GM12878 (cell line): ENCODE measurements at regions of chr16 and their contacts with region 1.

Region 1: DNA sequence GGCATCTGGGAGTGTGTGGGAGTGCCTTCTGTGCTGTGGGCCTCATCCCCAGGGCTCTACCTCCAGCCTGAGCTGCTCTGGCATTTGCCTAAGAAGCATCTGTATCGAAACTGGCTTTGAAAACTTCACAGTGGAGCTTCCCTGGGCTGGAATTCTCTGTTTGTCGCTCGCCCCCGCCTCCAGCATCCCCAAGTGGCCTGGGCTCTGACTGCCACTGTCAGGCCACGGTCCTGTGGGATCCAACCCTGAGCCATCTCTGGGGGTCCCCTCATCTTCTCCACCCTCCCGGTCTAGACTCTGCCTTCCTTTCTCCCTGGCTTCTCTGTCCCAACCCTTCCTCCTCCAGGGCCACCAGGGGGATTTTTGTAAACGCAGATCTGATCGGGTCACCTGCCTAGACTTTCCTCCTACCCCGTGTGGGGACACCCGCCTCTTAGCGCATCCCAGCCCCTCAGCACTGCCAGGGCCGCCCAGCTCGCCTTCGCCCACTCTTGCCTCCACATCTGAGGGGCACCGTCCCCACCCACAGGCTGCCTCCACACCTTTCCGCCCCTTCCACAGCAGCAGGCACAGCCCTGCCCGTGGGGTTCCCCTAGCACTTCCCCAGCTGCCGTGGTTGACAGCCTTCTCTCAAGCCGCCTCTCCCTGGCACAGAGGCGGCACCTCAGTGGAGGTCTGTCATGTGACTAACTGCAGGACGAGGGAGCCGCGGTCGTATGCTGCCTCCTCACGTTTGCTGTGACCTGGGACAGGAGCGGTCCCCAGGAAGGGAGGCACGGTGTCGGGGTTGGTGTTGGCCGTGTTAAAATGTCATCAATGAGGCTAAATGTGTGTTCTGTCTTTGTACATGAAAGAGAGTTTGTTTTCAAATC is 12.0 kb downstream of the TBC1D24 start:
- DNase-seq: peak; percentile 51
- ATAC-seq: peak; percentile 98
- H3K4me3 ChIP-seq: no peak overlapping the region
- H3K27ac ChIP-seq: no peak overlapping the region
- H3K4me1 ChIP-seq: peaks cover 16% of the 10 kb centered on the region
- H3K27me3 ChIP-seq: no peaks in the 10 kb centered on the region
- CTCF ChIP-seq: peak; percentile 49 to 95 (median 67); a peak in 5 of 6 replicates
- EP300 ChIP-seq: no peak; a peak in 1 of 4 replicates
- POLR2A ChIP-seq: peak; percentile 24; the same call in 1 of the 2 replicates
- RAD21 ChIP-seq: peak; percentile 61

Region 2: DNA sequence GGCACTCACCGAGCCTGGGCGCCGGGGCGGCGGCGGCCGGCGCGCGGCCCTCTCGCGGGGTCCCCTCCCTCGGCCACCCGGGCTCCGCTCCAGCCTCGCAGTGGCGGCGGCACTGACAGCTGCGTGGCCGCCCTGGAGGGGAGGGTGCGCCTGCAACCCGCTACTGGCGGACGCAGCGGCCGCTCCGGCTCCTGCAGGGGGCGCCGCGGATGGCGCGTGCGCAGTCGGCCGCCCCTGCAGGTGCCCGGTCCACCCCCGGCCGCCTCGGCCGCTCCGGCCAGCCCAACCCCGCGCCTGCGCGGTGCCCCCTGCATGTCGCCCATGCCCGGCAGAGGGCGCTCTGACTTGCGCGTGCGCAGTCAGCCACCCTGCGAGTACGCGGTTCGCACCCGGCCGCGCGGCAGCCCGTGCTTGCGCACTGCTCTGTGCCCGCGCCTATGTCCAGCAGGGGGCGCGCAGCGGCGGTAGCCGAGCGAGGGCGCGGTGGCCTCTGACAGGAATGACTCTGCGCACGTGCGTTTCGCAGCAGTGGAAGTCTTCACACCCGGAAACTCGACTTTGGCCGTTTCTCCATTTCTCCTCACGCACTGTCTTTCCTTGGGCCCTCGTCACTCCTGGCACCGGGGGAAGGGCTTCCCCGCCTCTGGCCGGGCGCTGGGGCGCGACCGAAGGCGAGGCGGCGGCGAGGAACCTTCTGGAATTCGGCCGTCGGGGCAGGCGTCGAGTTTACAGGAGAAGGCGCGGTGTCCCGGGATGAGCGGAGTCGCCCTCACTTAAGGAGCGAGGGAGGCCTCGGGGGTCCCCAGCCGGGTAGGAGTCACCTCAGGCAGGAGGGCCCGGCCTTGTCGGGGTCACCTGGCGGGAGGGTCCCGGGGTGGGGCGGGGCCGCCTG is 146.1 kb before region 1 on chr16 and contains the start of gene ABCA3:
- CTCF ChIA-PET with region 1: interaction called, 3 read pairs
- POLR2A ChIA-PET with region 1: no interaction called
- RAD21 ChIA-PET with region 1: no interaction called
- SMC1A ChIA-PET with region 1: no interaction called
- in situ Hi-C with region 1: no loop called
- intact Hi-C with region 1: loop called (anchors 5 kb)
- DNase-seq: peak; percentile 79
- ATAC-seq: peak; percentile 94
- H3K4me3 ChIP-seq: peak within 1 kb of the TSS; percentile 94
- H3K27ac ChIP-seq: peak within 1 kb of the TSS; percentile 31
- H3K4me1 ChIP-seq: peaks cover 3% of the 10 kb centered on the region; the same call in 1 of the 2 replicates
- H3K27me3 ChIP-seq: no peaks in the 10 kb centered on the region
- CTCF ChIP-seq: peak; percentile 92 to 100 (median 94)
- EP300 ChIP-seq: 0 out of 4 replicates have a peak, but pooled peaks of 1 of the 2 experiments have one; percentile 21
- POLR2A ChIP-seq: peak; percentile 57; the same call in 1 of the 2 replicates
- RAD21 ChIP-seq: peak; percentile 62
- polyA plus RNA-seq, gene ABCA3: 0.71 to 1.3 TPM

Region 3: GRCh38 chr16:2467521-2468151 is 19.2 kb before region 1 on chr16:
- CTCF ChIA-PET with region 1: interaction called, 4 read pairs
- POLR2A ChIA-PET with region 1: interaction called, 7 read pairs
- RAD21 ChIA-PET with region 1: interaction called, 17 read pairs
- SMC1A ChIA-PET with region 1: interaction called, 8 read pairs
- in situ Hi-C with region 1: no loop called
- intact Hi-C with region 1: no loop called
- DNase-seq: no peak
- ATAC-seq: peak; percentile 55
- H3K4me3 ChIP-seq: peak overlapping the region; percentile 72; the same call in 1 of the 2 replicates
- H3K27ac ChIP-seq: no peak overlapping the region
- H3K4me1 ChIP-seq: peaks cover 13% of the 10 kb centered on the region
- H3K27me3 ChIP-seq: peaks cover 0 to 2% of the 10 kb centered on the region in 2 experiments; a peak in 1 of 4 replicates
- CTCF ChIP-seq: peak in 1 of 3 experiments; percentile 13; a peak in 1 of 6 replicates
- EP300 ChIP-seq: no peak; a peak in 1 of 4 replicates
- POLR2A ChIP-seq: peak; percentile 68
- RAD21 ChIP-seq: no peak

Region 4: GRCh38 chr16:2474877-2475412 is 11.9 kb before region 1 on chr16 and contains the start of gene TBC1D24:
- CTCF ChIA-PET with region 1: interaction called, 10 read pairs
- POLR2A ChIA-PET with region 1: interaction called, 6 read pairs
- RAD21 ChIA-PET with region 1: interaction called, 17 read pairs
- SMC1A ChIA-PET with region 1: interaction called, 4 read pairs
- in situ Hi-C with region 1: no loop called
- intact Hi-C with region 1: no loop called
- DNase-seq: no peak
- ATAC-seq: peak; percentile 89
- H3K4me3 ChIP-seq: peak within 1 kb of the TSS; percentile 78
- H3K27ac ChIP-seq: peak within 1 kb of the TSS; percentile 66; the same call in 1 of the 2 replicates
- H3K4me1 ChIP-seq: peaks cover 12% of the 10 kb centered on the region
- H3K27me3 ChIP-seq: peaks cover 0 to 2% of the 10 kb centered on the region in 2 experiments; a peak in 1 of 4 replicates
- CTCF ChIP-seq: no peak
- EP300 ChIP-seq: no peak
- POLR2A ChIP-seq: peak; percentile 79
- RAD21 ChIP-seq: no peak
- polyA plus RNA-seq, gene TBC1D24: 1.1 to 1.5 TPM